Aorta (tissue), 5 donors: ENCODE measurements at regions of chr3 and their contacts with region 1.

Region 1: GRCh38 chr3:58299839-58300516 is 6.1 kb upstream of the RPP14 start:
- DNase-seq: no peak
- ATAC-seq: no peak
- H3K4me3 ChIP-seq: no peak overlapping the region
- H3K27ac ChIP-seq: no peak overlapping the region
- H3K4me1 ChIP-seq: no peaks in the 10 kb centered on the region
- H3K27me3 ChIP-seq: no peaks in the 10 kb centered on the region

Region 2: DNA sequence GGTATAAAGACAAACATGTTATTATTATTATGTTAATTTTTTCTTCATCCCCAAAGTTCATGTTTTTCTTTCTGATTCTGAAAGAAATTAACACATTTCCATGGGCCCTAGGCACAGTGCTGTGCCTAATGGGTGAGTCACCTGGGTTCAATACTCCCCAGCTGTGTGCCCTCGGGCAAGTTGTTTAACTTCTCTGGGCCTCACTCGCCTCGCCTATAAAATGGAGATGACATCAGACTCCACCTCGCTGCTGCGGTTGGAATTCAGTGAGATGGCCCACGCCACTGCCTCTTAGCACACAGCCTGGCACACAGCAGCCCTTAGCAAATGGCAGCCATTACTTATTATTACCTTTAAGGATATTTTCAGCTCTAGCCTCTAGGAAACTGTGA is 111.8 kb before region 1 on chr3:
- intact Hi-C with region 1: loop called (anchors 5 kb)
- DNase-seq: no peak
- ATAC-seq: no peak
- H3K4me3 ChIP-seq: no peak overlapping the region
- H3K27ac ChIP-seq: no peak overlapping the region
- H3K4me1 ChIP-seq: no peaks in the 10 kb centered on the region
- H3K27me3 ChIP-seq: no peaks in the 10 kb centered on the region